Adrenal gland (tissue), 19 donors: ENCODE measurements at regions of chr21 and their contacts with region 1.

Region 1: DNA sequence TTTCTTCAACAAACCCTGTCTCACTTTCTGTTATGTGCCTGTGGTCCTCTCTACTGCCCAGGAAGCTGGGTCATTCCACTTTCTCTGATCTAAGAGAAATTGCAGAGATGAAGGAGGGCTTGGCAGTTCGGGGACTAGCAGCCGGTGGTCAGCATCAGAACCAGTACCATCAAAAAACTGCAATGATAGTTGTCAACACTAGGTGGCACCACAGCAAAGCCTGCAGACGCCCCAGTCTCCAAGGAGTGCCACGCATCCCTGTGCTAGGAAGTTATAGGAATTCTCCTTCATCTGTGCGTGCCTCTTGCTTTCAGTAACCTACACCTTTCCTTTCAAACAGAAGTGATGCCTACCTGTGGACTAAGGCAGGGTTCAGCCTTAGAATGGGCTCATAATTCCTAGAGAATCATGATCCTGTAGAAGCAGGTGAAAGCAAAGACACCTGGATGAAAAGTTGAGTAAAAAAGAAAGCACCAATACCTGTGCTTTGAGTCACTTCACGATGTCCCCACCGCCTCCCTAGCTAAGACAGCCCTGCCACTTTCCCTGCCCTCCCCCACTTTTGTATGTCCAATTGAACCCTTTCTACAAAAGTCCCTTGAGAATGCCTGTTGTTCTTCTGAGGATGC is 129.2 kb downstream of the ADAMTS1 start:
- DNase-seq: peak; percentile 35 to 67 (median 50)
- H3K4me3 ChIP-seq: no peak overlapping the region
- H3K27ac ChIP-seq: peak overlapping the region in 1 of 5 donors; percentile 44
- H3K4me1 ChIP-seq: peaks cover 6 to 26% of the 10 kb centered on the region in 2 donors
- H3K27me3 ChIP-seq: no peaks in the 10 kb centered on the region
- CTCF ChIP-seq: peak; percentile 42 to 73 (median 57)
- POLR2A ChIP-seq: no peak

Region 2: DNA sequence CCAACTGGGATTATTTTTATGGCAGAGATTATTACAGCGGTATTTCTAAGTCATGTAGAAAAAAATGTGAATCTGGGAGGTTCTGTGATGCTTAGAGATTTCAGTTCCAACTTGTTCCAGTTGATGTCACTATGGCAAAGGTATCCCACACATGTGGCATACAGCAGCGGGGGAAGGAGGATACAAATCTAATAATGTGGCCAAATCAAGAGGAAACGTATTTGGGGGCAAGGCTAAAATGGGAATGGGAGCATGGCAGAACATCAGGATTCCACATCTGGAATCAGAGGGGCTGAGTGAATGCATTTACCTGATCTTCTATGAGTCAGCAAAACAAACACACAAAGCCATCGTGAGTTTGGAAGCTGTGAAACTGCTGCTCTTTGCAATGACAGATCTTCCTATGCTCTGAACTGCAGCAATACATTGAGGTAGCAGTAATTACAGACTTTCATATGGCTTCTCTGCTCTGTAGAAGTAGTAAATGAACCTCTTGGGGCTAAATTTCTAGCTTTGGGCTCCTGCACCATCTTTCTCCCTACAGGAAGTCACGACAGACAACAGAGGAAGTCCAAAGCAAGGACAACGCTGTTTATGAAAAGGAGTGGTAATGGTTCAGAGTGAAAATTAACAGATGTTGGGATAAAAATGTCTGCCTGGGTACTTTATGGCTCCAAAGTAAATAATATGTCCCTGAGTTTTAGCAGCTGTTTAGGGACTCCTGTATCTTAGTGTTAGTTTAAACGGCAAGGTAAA is 925.7 kb before region 1 on chr21:
- intact Hi-C with region 1: loop called in 1 of 2 experiments (anchors 10 kb)
- DNase-seq: peak in 4 of 7 donors; percentile 18 to 42 (median 22)
- H3K4me3 ChIP-seq: peak overlapping the region in 2 of 4 donors; percentile 26 to 51
- H3K27ac ChIP-seq: peak overlapping the region in 2 of 5 donors; percentile 2 to 21
- H3K4me1 ChIP-seq: peaks cover 4 to 9% of the 10 kb centered on the region in 2 donors
- H3K27me3 ChIP-seq: no peaks in the 10 kb centered on the region
- CTCF ChIP-seq: peak; percentile 23 to 52 (median 43)
- POLR2A ChIP-seq: no peak

Region 3: DNA sequence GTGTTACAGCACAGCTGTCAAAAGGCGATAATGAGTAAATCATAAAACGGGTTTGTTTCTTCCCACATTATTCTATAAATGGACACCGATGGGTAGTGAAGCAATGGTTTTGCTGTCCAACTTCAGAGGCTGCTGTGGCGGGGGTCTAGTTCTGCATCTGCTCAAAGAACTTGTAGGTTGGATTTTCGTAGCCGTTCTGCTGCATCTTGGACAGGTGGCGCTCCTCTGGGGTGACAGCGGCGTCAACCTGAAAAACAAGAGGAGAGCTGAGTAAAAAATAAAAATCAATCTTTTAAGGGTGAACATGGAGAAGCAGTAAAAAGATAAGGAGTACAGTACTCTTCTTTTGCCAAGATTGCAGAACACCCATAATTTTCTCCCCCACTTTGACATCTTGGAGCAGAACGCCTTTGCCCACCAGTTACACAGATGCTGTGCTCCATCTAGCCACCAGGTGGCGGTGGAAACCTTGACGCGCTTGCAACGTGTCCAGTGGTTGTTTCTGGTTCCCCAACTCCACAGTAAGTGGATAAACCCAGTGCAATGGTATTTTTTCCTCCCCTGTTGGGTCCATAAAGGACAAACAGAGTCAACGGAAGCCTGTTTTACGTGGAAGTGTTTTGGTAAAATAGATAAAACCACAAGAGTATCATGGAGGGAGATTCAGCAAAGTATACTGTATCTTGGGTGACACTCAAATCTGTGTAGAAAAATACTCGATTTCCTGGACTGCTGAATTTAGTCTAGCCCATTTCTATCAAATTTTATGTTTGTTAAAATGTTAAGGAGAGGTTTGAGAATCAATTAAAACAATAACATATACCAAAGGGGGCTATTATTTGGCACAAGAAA is 834.2 kb before region 1 on chr21:
- intact Hi-C with region 1: loop called in 1 of 2 experiments (anchors 10 kb)
- DNase-seq: peak; percentile 61 to 85 (median 64)
- H3K4me3 ChIP-seq: no peak overlapping the region
- H3K27ac ChIP-seq: no peak overlapping the region
- H3K4me1 ChIP-seq: no peaks in the 10 kb centered on the region
- H3K27me3 ChIP-seq: no peaks in the 10 kb centered on the region
- CTCF ChIP-seq: peak; percentile 82 to 94 (median 91)
- POLR2A ChIP-seq: no peak

Region 4: GRCh38 chr21:25895565-25896205 is 820.3 kb before region 1 on chr21:
- intact Hi-C with region 1: loop called in 1 of 2 experiments (anchors 5 kb)
- DNase-seq: peak in 1 of 7 donors; percentile 37
- H3K4me3 ChIP-seq: no peak overlapping the region
- H3K27ac ChIP-seq: peak overlapping the region in 1 of 5 donors; percentile 22
- H3K4me1 ChIP-seq: peaks cover 0 to 22% of the 10 kb centered on the region in 2 donors
- H3K27me3 ChIP-seq: no peaks in the 10 kb centered on the region
- CTCF ChIP-seq: peak; percentile 48 to 72 (median 69)
- POLR2A ChIP-seq: no peak

Region 5: DNA sequence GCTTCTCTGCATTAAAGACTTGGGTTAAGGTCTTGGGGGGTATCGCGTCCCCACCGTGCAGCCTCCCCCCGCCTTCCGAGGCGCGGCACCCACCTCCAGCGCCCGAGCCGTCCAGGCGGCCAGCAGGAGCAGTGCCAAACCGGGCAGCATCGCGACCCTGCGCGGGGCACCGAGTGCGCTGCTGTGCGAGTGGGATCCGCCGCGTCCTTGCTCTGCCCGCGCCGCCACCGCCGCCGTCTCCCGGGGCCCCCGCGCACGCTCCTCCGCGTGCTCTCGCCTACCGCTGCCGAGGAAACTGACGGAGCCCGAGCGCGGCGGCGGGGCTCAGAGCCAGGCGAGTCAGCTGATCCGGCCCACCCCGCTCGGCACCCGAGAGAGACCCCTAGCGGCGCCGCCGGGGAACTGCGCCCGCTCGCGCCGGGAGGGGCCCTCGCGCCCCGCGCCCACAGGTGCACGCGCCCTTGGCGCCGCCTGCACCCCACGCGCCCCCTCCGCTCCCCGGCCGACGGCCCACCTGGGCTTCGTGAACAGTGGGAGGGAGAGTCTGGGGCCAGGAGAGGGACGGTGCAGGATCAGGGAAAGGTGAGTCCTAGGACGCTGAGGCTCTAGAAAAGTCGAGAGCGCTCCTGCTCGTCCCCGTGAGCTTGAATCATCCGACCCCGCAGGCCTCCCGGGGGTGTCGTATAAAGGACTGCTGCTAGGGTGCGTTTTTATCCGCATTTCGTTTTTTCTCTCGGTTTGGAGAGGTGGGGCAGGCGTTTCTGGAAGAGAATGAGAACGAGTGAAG is 545.3 kb before region 1 on chr21 and contains the start of gene APP:
- intact Hi-C with region 1: loop called (anchors 10 kb)
- DNase-seq: peak; percentile 83 to 92 (median 87)
- H3K4me3 ChIP-seq: peak within 1 kb of the TSS; percentile 92 to 98 (median 94)
- H3K27ac ChIP-seq: peak within 1 kb of the TSS; percentile 71 to 98 (median 91)
- H3K4me1 ChIP-seq: peaks cover 14 to 42% of the 10 kb centered on the region in 2 donors
- H3K27me3 ChIP-seq: no peaks in the 10 kb centered on the region
- CTCF ChIP-seq: peak; percentile 34 to 100 (median 70)
- POLR2A ChIP-seq: peak; percentile 84 to 92
- total RNA-seq, gene APP: 479 to 1,079 (median 718) TPM

Region 6: DNA sequence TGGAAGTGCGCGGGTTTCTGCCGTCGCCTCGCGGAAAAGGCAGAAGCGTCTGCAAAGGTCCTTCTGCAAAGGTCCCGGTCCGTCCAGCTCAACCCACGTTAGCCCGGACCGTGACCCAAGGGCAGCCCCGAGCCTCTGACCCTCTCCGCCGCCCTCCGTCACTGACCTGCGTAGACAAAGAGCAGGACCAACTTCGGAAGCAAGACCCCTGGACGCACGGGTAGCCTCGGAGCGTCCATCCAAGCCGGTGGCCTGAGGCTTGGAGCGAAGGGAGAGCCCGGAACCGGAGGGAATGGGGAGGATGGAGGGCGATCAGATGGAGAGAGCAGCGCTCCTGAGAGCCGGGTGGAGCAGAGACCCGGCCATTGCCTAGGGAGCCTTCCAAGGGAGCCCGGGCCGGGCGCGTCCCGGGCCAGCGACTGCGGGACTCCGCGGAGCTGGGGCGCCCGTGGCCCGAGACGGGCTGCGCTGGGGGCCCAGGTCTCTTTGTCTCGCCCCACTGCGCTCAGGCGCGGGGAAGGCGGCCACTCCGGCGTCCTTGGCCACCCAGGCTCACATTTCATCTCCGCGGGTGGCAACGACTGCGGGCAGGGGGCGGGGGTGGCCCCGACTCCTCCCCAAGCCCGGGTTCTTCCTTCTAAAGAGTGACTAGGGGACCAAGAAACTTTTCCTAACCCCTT is 143.2 kb before region 1 on chr21 and contains the start of gene CYYR1:
- intact Hi-C with region 1: loop called in 1 of 2 experiments (anchors 10 kb)
- DNase-seq: peak; percentile 58 to 74 (median 70)
- H3K4me3 ChIP-seq: peak within 1 kb of the TSS in 3 of 4 donors; percentile 64 to 81 (median 75)
- H3K27ac ChIP-seq: peak within 1 kb of the TSS; percentile 50 to 90 (median 83)
- H3K4me1 ChIP-seq: peaks cover 0 to 5% of the 10 kb centered on the region in 2 donors
- H3K27me3 ChIP-seq: no peaks in the 10 kb centered on the region
- CTCF ChIP-seq: no peak
- POLR2A ChIP-seq: peak in 1 of 2 donors; percentile 71
- total RNA-seq, gene CYYR1: 30.4 to 114 (median 61.3) TPM